Thyroid gland (tissue), 4 donors: ENCODE measurements at regions of chr14 and their contacts with region 1.

Region 1: GRCh38 chr14:77014004-77014604 is 14.4 kb downstream of the IRF2BPL start:
- DNase-seq: peak; percentile 97 to 98
- H3K4me3 ChIP-seq: no peak overlapping the region
- H3K27ac ChIP-seq: peak overlapping the region; percentile 87 to 90 (median 89)
- H3K4me1 ChIP-seq: peaks cover 33 to 43% of the 10 kb centered on the region in 2 donors
- H3K27me3 ChIP-seq: no peaks in the 10 kb centered on the region
- CTCF ChIP-seq: no peak
- POLR2A ChIP-seq: peak in 1 of 2 donors; percentile 70

Region 2: GRCh38 chr14:76836029-76836630 is 178.0 kb before region 1 on chr14:
- intact Hi-C with region 1: no loop called
- DNase-seq: no peak
- H3K4me3 ChIP-seq: no peak overlapping the region
- H3K27ac ChIP-seq: no peak overlapping the region
- H3K4me1 ChIP-seq: no peaks in the 10 kb centered on the region
- H3K27me3 ChIP-seq: no peaks in the 10 kb centered on the region
- CTCF ChIP-seq: no peak
- POLR2A ChIP-seq: no peak

Region 3: DNA sequence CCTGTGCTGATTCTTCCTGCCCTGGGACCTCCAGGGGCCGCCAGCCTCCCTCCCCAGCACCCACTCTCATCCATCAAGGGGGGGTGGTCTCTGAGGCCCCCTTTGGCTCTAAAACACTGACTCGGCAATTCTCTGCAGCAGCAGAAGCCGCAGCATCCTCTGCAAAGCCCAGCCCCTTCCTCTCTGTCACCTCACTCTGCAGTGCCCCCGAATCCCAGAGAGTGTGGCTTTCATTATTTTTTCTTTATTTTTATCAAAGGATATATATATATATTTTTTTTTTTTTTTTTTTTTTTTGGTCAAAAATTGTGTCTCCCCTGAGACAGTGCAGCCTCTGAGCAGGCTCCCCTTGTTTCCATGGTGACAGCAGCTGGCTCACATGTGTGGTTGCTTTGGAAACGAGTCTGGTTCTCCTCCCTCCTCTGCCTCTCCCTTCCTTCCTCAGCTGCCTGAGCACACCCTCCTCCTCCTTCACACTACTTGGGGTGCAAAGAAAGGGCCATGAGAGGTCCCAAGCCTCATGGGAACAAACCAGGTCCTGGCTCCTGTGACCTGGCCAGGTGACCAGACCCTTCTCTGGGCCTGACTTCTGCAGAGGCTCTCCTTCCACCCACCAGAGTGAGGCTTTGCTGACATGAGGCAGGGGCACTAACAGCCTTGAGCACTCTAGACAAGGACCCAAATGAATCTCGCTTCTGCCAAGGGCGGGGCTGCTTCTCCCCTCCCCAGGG is 87.4 kb before region 1 on chr14:
- intact Hi-C with region 1: no loop called
- DNase-seq: no peak
- H3K4me3 ChIP-seq: no peak overlapping the region
- H3K27ac ChIP-seq: peak overlapping the region; percentile 86 to 93 (median 89)
- H3K4me1 ChIP-seq: peaks cover 34 to 54% of the 10 kb centered on the region in 2 donors
- H3K27me3 ChIP-seq: no peaks in the 10 kb centered on the region
- CTCF ChIP-seq: no peak
- POLR2A ChIP-seq: no peak

Region 4: DNA sequence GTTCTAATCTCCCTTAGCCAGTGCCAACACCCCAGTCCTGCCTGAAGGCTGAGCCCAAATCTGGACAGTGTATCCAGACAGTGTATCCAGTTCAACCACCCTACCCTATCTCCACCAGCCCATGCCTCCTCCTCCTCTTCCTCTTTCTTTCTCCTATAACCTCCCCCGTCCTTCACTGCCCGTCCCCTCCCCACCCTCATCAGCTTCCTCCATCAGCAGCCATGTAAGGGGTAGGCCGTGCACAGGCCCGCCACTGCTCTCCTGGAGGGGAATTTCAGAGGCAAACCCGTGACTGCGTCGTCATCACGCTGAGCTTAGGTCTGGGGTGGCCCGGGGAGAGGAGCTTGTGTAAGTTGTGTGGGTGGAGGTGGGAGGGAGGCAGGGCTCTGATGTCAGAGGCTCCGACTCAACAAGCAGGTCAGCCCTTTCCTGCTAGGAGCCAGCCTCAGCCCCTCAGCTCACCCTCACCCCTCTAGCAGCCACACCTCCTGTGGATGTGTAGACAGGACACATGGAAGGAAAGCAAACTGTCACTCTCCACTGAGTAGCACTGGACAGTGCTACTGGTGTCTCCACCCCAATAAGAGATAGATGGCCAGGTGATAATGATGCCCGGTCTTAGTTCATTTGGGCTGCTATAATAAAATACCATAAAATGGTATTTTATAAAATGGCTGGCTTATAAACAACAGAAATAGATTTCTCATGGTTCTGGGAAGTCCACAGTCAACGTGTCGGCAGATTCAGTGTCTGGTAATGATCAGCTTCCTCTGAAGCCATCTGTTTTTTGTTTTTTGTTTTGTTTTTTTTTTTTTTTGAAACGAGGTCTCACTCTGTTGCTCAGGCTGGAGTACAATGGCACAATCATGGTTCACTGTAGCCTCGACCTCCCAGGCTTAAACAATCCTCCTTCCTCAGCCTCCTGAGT is 36.0 kb before region 1 on chr14:
- intact Hi-C with region 1: loop called (anchors 5 kb)
- DNase-seq: peak; percentile 56 to 77
- H3K4me3 ChIP-seq: no peak overlapping the region
- H3K27ac ChIP-seq: peak overlapping the region in 2 of 3 donors; percentile 63 to 75
- H3K4me1 ChIP-seq: peaks cover 18 to 20% of the 10 kb centered on the region in 2 donors
- H3K27me3 ChIP-seq: no peaks in the 10 kb centered on the region
- CTCF ChIP-seq: no peak
- POLR2A ChIP-seq: no peak

Region 5: GRCh38 chr14:77203611-77204477 is 189.7 kb after region 1 on chr14:
- intact Hi-C with region 1: no loop called
- DNase-seq: no peak
- H3K4me3 ChIP-seq: no peak overlapping the region
- H3K27ac ChIP-seq: no peak overlapping the region
- H3K4me1 ChIP-seq: no peaks in the 10 kb centered on the region
- H3K27me3 ChIP-seq: no peaks in the 10 kb centered on the region
- CTCF ChIP-seq: no peak
- POLR2A ChIP-seq: no peak

Region 6: GRCh38 chr14:77219591-77219990 is 205.5 kb after region 1 on chr14:
- intact Hi-C with region 1: no loop called
- DNase-seq: peak; percentile 47 to 53
- H3K4me3 ChIP-seq: no peak overlapping the region
- H3K27ac ChIP-seq: no peak overlapping the region
- H3K4me1 ChIP-seq: no peaks in the 10 kb centered on the region
- H3K27me3 ChIP-seq: no peaks in the 10 kb centered on the region
- CTCF ChIP-seq: no peak
- POLR2A ChIP-seq: no peak